ENCODE measurements at regions of chr3 and their contacts with region 1.

Region 1: GRCh38 chr3:133750259-133750656 is 4.1 kb downstream of the TF start:
- DNase-seq: peak in 2 of 3 donors; percentile 52 to 66
- ATAC-seq: peak in 2 of 4 donors; percentile 7 to 28
- H3K4me3 ChIP-seq: peak overlapping the region in 2 of 3 donors; percentile 87
- H3K27ac ChIP-seq: peak overlapping the region in 2 of 3 donors; percentile 37 to 79
- H3K4me1 ChIP-seq: peaks cover 0 to 26% (median 8%) of the 10 kb centered on the region in 4 donors
- H3K27me3 ChIP-seq: no peaks in the 10 kb centered on the region
- CTCF ChIP-seq: no peak
- POLR2A ChIP-seq: no peak

Region 2: GRCh38 chr3:133661454-133662277 is 88.6 kb before region 1 on chr3 and contains the start of gene TOPBP1:
- intact Hi-C with region 1: loop called in 1 of 2 experiments (anchors 5 kb)
- DNase-seq: peak; percentile 86 to 88 (median 87)
- ATAC-seq: peak; percentile 87 to 89 (median 88)
- H3K4me3 ChIP-seq: peak within 1 kb of the TSS; percentile 73 to 92 (median 77)
- H3K27ac ChIP-seq: peak within 1 kb of the TSS; percentile 29 to 72 (median 68)
- H3K4me1 ChIP-seq: peaks cover 0 to 22% (median 8%) of the 10 kb centered on the region in 4 donors
- H3K27me3 ChIP-seq: no peaks in the 10 kb centered on the region
- CTCF ChIP-seq: no peak
- POLR2A ChIP-seq: peak; percentile 55
- total RNA-seq, gene TOPBP1: 5.3 to 20.6 (median 8.1) TPM

Region 3: DNA sequence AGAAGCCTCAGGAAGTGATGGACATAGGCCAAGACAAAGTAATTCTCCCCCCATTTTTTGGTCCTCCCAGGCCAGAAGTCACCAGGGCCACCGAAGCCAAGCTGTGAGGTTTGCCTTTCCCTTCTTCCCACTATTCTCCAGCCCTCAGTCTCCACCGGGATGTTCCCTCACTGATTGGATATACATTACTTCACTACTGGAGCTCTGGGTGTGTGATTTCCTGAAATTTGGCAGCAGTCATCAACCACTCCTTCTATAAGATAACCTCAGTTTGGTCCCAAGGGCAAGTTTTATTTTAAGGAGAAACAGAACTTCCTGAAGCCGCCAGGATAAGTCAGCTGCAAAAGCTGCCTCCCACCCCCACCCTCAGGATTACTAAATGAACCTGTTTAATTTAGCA is 268.1 kb after region 1 on chr3:
- intact Hi-C with region 1: no loop called
- DNase-seq: no peak
- ATAC-seq: no peak
- H3K4me3 ChIP-seq: no peak overlapping the region
- H3K27ac ChIP-seq: no peak overlapping the region
- H3K4me1 ChIP-seq: no peaks in the 10 kb centered on the region
- H3K27me3 ChIP-seq: no peaks in the 10 kb centered on the region
- CTCF ChIP-seq: no peak
- POLR2A ChIP-seq: no peak

Region 4: GRCh38 chr3:134087046-134087985 is 337.1 kb after region 1 on chr3:
- intact Hi-C with region 1: no loop called
- DNase-seq: no peak
- ATAC-seq: no peak
- H3K4me3 ChIP-seq: no peak overlapping the region
- H3K27ac ChIP-seq: no peak overlapping the region
- H3K4me1 ChIP-seq: no peaks in the 10 kb centered on the region
- H3K27me3 ChIP-seq: no peaks in the 10 kb centered on the region
- CTCF ChIP-seq: no peak
- POLR2A ChIP-seq: no peak